GM10248 (cell line): ENCODE measurements at regions of chr17 and their contacts with region 1.

Region 1: DNA sequence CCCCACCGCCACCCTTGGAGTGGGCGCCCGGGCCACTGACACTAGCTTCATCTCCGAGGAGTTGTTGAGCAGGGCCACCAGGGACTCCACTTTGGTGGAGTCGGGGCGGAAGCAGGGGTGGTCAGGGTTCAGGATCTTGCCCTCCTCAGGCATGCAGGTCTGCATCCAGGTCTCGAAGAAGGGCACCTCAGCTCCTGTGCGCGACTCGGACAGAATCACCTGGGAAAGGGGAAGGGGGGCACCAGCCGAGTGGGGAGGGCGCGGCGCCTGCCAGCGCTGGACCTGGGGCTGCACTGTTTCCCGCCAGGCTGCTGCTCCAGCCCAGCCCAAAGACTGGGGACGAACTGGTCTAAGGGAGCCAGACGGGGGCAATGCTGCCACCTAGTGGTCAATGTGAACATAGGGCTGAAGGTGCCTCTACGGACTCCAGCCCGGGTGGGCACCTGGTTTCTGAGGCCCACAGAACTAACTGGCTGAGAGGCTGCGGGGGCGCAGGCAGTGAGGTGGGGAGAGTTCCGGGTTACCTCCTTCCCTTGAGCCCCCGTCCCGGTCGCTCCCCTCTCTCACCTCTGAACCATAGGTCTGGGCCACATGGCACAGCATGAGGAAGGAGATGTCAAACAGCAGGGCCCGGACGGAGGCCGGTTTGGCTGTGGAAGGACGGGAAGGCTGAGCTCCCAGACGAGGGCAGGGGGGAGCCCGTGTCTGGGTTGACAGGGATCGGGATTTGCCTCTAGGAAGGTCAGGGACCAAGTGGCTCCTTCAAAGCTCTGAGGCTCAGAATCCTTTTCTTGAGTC is 11.8 kb downstream of the CSF3 start:
- DNase-seq: peak; percentile 92
- CTCF ChIP-seq: peak; percentile 84

Region 2: GRCh38 chr17:39704821-39705551 is 322.0 kb before region 1 on chr17:
- CTCF ChIA-PET with region 1: no interaction called
- POLR2A ChIA-PET with region 1: no interaction called
- DNase-seq: no peak
- CTCF ChIP-seq: no peak

Region 3: DNA sequence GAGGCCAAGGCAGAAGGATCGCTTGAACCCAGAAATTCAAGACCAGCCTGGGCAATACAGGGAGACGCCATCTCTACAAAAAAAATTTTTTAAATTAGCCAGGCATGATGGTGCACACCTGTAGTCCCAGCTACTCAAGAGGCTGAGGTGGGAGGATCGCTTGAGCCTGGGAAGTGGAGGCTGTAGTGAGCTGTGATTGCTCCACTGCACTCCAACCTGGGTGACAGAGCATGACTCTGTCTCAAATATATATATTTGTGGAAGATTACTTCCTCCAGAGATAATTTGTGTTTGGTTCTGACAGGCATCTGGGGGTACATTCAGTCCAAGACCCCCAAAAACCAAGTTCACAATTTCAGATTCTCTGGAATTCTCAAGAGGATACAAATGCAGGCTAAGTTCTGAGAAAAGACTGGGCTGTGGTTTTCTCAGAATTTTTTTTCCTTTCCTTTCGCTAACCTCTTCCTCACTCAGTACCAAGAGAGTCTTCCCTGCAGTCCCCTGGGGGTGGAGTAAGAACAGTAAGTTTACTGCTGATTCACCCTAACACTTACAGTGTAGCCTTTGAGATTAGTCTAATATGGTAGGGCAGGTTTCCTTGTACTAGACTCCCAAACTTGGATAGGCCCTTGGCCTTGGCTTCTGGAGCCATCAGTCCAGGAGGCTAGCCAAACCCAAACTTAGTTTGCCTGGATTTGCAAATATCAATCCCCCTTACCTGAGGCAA is 123.7 kb before region 1 on chr17:
- CTCF ChIA-PET with region 1: no interaction called
- POLR2A ChIA-PET with region 1: no interaction called
- DNase-seq: no peak
- CTCF ChIP-seq: no peak

Region 4: DNA sequence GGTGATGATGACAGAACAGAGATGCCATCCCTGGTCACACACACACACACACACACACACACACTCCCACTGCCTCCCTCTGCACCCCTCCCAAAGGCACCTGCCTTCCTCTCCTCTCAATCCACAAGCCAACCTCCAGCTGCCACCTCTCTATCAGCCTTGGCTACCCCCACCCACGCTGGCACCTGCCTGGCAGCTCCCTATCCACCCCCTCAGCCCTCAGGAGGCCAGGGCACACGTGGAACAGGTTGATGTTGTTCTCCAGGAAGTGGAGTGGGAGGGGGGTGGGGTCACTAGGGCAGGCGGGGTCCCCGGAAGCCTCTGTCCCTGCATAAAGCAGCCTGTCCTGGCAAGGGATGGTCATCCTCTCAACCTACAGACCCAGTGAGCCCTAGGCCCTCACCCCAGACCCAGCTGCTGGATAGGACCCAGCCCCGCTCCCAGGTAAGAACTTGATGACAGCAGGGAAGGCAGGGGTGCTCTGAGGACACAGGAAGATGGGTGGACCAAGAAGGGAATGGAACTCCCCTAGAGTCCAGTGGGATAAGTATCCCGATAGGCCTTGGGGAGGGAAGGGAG is 64.3 kb before region 1 on chr17 and contains the start of gene GSDMA:
- CTCF ChIA-PET with region 1: interaction called, 14 read pairs
- POLR2A ChIA-PET with region 1: no interaction called
- DNase-seq: no peak
- CTCF ChIP-seq: no peak

Region 5: GRCh38 chr17:40038882-40039513 is 12.0 kb after region 1 on chr17:
- CTCF ChIA-PET with region 1: interaction called, 75 read pairs
- POLR2A ChIA-PET with region 1: no interaction called
- DNase-seq: no peak
- CTCF ChIP-seq: peak; percentile 10

Region 6: DNA sequence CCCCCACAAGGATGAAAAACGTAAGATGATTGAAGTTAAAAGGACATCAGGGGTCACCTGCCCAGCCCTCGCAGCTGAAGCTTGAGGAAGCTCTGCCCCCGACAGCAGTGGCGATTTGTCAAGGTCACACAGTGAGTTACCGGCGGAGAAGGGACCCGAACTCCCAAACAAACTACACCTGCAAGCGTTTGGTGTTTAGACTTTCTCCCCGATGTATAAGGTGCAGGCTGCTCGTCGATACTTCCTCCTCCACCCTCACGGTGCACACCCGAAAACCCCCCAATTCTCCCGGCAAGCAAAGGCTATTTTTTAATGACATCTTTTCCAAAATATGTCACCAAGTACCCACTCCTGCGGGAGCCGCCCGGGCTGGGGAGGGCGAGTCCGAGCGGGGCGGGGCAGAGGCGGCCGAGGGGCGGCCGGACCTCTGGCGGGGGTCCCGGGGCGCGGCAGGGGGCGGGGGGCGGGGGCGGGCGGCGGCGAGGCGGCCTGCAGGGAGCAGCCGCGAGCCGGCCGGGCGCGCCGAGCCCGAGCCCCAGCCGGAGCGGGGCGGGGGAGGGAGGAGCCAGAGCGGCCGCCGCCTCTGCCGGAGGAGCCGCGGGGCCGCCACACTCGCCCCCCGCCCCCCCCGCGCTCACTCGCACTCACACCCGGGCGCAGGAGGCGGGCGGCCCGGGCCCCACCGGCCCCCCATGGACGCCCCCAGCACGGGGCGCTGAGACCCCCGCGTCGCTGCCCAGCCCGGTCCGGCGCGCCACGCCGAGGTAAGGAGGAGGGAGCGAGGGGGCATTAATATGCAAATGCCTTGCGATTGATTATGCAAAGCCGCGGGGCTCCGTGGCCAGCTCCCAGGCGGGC is 35.5 kb after region 1 on chr17 and contains the start of gene THRA:
- CTCF ChIA-PET with region 1: interaction called, 29 read pairs
- POLR2A ChIA-PET with region 1: no interaction called
- DNase-seq: peak; percentile 88
- CTCF ChIP-seq: peak; percentile 27